ENCODE measurements at regions of chr2 and their contacts with region 1.

Region 1: DNA sequence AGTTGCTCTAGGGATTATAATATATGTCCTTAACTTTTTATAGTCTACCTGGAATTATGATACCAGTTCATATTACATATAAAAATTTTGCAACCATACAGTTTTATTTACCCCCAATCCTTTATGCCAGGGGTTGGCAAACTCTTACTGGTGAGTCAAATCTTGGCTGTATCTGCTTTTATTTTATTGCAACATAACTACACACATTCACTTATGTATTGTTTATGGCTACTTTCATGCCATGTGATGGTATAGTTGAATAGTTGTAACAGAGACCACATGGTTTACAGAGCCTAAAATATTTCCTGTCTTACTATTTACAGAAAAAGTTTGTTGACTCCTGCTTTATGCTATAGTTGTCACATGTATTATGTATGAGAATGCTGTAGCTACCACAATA is 25.8 kb upstream of the DLX2 start:
- DNase-seq: no peak
- ATAC-seq: no peak
- H3K4me3 ChIP-seq: no peak overlapping the region
- H3K27ac ChIP-seq: no peak overlapping the region
- H3K4me1 ChIP-seq: no peaks in the 10 kb centered on the region
- H3K27me3 ChIP-seq: no peaks in the 10 kb centered on the region
- CTCF ChIP-seq: no peak

Region 2: GRCh38 chr2:171939743-171940071 is 188.8 kb before region 1 on chr2:
- CTCF ChIA-PET with region 1: no interaction called
- POLR2A ChIA-PET with region 1: interaction called, 13 read pairs
- in situ Hi-C with region 1: no loop called
- intact Hi-C with region 1: no loop called
- DNase-seq: no peak
- ATAC-seq: no peak
- H3K4me3 ChIP-seq: no peak overlapping the region
- H3K27ac ChIP-seq: no peak overlapping the region
- H3K4me1 ChIP-seq: no peaks in the 10 kb centered on the region
- H3K27me3 ChIP-seq: no peaks in the 10 kb centered on the region
- CTCF ChIP-seq: no peak

Region 3: DNA sequence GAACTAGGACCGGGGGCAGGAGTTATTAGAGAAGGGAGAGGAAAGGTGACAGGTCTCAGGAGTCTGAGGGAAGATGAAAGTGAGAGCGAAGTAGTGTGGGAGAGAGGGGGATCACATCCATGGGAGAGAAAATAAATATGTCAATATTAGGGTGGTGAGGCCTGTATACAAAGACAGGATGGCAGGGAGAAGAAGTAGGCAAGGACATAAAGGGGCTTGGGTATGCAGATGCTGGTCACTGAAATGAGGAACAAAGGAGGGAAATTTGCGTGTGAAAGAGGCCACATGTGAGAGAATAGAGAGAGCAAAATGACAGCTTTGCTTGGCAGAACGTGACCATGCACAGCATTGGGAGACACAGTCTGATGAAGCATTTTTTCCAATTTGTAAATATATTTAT is 115.1 kb before region 1 on chr2:
- CTCF ChIA-PET with region 1: no interaction called
- POLR2A ChIA-PET with region 1: no interaction called
- in situ Hi-C with region 1: no loop called
- intact Hi-C with region 1: no loop called
- DNase-seq: no peak
- ATAC-seq: no peak
- H3K4me3 ChIP-seq: no peak overlapping the region
- H3K27ac ChIP-seq: no peak overlapping the region
- H3K4me1 ChIP-seq: no peaks in the 10 kb centered on the region; the same call in 1 of the 2 replicates
- H3K27me3 ChIP-seq: no peaks in the 10 kb centered on the region
- CTCF ChIP-seq: no peak

Region 4: DNA sequence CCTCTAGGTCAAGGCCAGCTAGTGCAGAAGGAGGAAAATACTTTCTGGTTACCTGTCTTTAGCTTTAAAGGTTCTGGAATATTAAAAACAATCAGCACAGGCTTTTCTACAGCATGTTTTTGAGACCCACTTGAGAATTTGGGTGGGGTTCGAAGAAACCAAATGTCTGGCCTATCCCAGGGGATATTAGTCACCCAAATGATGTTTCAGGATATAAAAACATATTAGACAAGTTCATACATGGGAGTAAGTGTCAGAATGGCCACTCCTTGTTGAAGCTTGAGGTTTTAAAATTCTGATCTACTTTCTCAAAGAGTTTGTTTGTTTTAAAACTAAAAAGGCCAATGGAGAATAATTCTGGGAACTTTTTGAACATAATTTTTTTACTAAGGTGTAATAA is 132.8 kb after region 1 on chr2:
- CTCF ChIA-PET with region 1: no interaction called
- POLR2A ChIA-PET with region 1: no interaction called
- in situ Hi-C with region 1: no loop called
- intact Hi-C with region 1: no loop called
- DNase-seq: no peak
- ATAC-seq: no peak
- H3K4me3 ChIP-seq: no peak overlapping the region
- H3K27ac ChIP-seq: no peak overlapping the region
- H3K4me1 ChIP-seq: no peaks in the 10 kb centered on the region
- H3K27me3 ChIP-seq: no peaks in the 10 kb centered on the region
- CTCF ChIP-seq: no peak